Activated CD4-positive, alpha-beta memory T cell treated with anti-CD3 and anti-CD28 coated beads, Interleukin-2, amount 10 ng/mL, durations not matched to agents 7 days and 5 days (primary cell): ENCODE measurements at regions of chr11 and their contacts with region 1.

Region 1: DNA sequence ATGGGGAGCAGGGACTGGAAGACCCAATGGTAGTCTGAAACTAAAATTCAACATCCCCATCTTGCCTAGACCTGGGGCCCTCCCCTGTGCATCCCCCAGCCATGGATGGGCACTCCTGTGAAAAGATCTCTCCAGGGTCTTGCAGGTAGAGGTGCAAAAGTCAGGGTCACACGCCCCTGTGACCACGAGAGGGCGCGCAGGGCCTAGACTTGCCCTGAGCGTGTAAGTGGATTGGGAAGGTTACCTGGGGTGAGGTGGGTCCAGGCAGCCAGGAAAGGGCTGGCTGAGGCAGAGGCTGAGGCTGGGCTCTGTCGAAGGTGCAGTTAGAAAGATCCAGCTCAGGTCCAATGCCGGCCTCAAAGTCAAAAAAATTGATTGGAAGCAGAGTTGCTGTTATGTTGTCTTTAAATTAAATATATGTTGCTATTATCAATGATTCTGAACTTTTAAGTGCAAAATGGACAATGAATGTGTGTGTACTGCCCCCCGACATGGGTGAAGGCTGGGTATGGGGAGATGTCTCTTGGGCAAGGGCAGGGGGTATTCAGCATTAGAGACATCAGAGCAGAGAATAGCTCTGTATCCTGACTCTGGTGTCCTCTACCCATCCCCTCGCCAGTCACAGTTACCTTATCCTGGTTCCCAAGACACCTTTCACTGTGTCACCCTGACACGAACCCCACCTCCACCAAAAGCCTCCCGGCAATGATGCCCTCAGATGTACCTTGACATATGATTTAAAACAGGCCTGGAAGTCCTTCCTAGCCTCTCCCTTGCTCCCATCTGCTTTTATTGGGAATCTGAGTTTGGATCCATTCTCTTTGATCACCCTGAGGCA is 4.7 kb upstream of the POU2F3 start:
- DNase-seq: peak; percentile 72
- H3K4me3 Mint-ChIP-seq: no peak overlapping the region
- H3K27ac Mint-ChIP-seq: no peak overlapping the region
- H3K4me1 Mint-ChIP-seq: no peaks in the 10 kb centered on the region
- H3K27me3 Mint-ChIP-seq: peaks cover 58% of the 10 kb centered on the region

Region 2: GRCh38 chr11:120248551-120249278 is 13.5 kb after region 1 on chr11:
- CTCF ChIA-PET with region 1: interaction called, 50 read pairs
- POLR2A ChIA-PET with region 1: interaction called, 3 read pairs
- DNase-seq: peak; percentile 24
- H3K4me3 Mint-ChIP-seq: peak overlapping the region; percentile 36
- H3K27ac Mint-ChIP-seq: peak overlapping the region; percentile 61
- H3K4me1 Mint-ChIP-seq: peaks cover 54% of the 10 kb centered on the region
- H3K27me3 Mint-ChIP-seq: peaks cover 77% of the 10 kb centered on the region